Panc1 (cell line): ENCODE measurements at regions of chr1 and their contacts with region 1.

Region 1: DNA sequence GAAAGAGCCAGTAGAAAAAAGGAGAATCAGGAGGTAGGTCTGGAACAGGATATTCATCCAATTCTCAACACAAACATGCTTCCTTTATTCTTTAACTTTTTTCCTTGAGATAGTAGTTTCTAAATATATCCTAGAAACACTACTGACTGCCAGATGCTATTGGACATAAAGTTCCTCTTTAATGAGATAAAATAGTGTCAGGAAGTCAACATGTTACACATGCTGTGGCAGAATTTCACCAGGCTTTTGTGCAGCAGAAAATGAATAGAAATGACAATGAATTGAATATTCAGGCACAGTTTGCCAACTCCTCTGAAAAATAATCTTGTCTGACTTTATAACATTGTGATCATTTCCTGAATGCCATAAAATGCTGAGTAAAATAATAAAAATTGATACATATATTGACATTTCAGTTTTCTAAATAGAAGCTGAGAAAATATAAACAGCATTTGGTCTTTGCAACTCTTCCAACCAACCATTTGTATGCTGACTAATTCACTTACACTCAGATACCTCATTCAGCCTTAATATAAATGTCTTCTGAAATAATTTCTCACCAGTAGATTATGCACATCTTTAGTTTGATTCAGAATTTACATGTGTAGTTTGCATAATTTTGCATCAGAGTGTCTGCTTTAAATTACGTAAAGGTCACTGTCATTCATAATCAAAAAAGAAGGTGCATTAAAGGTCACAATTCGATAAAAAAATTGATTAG is 486.1 kb upstream of the ADGRL2 start:
- DNase-seq: no peak
- ATAC-seq: no peak
- H3K4me3 ChIP-seq: no peak overlapping the region
- H3K27ac ChIP-seq: no peak overlapping the region
- H3K4me1 ChIP-seq: no peaks in the 10 kb centered on the region
- H3K27me3 ChIP-seq: no peaks in the 10 kb centered on the region
- CTCF ChIP-seq: no peak

Region 2: DNA sequence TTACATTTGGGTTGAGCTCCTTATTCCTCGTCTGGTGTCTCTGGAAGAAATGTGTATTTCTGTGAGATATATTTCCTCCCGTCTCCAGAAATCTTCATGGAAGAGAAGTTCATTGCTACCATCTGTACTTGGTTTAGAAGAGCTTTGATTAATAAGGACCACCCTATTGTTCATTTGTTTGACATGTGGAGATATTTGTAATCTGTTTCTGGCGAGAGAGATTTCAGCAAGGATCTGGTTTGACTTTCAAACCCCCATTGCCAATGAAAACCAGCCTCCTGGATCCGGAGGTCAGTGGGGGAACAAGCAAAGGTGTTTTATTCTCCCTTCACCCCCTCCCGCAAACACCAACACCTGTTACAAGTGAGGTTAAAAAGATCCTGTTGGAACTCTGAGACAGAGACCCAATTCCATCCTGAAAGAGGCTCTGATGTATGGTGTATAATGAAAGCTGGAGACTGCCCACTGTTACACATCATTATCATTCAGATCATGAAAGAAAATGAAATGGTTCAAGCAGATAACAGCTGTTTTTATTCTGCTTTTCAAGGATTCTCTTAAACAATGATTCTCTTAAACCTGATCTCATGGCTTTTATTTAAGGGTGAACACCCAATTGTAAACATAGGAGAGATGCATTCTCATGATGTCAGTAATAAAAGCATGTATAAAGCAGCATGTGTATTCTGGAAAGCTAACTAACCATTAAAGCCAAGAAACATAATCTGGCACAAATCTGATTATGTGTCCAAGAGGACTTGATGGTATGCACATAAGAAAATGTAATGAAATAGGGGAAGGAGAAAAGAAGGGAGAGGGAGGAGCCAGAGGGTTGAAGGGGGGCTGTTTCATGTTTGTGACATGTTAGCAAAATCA is 92.6 kb after region 1 on chr1:
- CTCF ChIA-PET with region 1: no interaction called
- POLR2A ChIA-PET with region 1: no interaction called
- in situ Hi-C with region 1: no loop called
- intact Hi-C with region 1: no loop called
- DNase-seq: no peak
- ATAC-seq: no peak
- H3K4me3 ChIP-seq: no peak overlapping the region
- H3K27ac ChIP-seq: no peak overlapping the region
- H3K4me1 ChIP-seq: no peaks in the 10 kb centered on the region
- H3K27me3 ChIP-seq: no peaks in the 10 kb centered on the region
- CTCF ChIP-seq: no peak

Region 3: GRCh38 chr1:81437649-81438048 is 123.0 kb after region 1 on chr1:
- CTCF ChIA-PET with region 1: no interaction called
- POLR2A ChIA-PET with region 1: no interaction called
- in situ Hi-C with region 1: no loop called
- intact Hi-C with region 1: loop called (anchors 10 kb)
- DNase-seq: no peak
- ATAC-seq: no peak
- H3K4me3 ChIP-seq: no peak overlapping the region
- H3K27ac ChIP-seq: no peak overlapping the region
- H3K4me1 ChIP-seq: no peaks in the 10 kb centered on the region
- H3K27me3 ChIP-seq: no peaks in the 10 kb centered on the region
- CTCF ChIP-seq: no peak